MCF 10A (cell line): ENCODE measurements at regions of chr10 and their contacts with region 1.

Region 1: GRCh38 chr10:62038609-62039190 is 137.2 kb downstream of the ARID5B start:
- DNase-seq: peak; percentile 78
- H3K4me3 Mint-ChIP-seq: peak overlapping the region; percentile 30
- H3K27ac Mint-ChIP-seq: peak overlapping the region; percentile 52
- H3K4me1 Mint-ChIP-seq: peaks cover 41% of the 10 kb centered on the region
- H3K27me3 Mint-ChIP-seq: no peaks in the 10 kb centered on the region
- CTCF ChIP-seq: peak; percentile 76

Region 2: GRCh38 chr10:61404751-61405150 is 633.9 kb before region 1 on chr10:
- CTCF ChIA-PET with region 1: no interaction called
- POLR2A ChIA-PET with region 1: no interaction called
- intact Hi-C with region 1: no loop called
- DNase-seq: peak; percentile 2
- H3K4me3 Mint-ChIP-seq: no peak overlapping the region
- H3K27ac Mint-ChIP-seq: no peak overlapping the region
- H3K4me1 Mint-ChIP-seq: no peaks in the 10 kb centered on the region
- H3K27me3 Mint-ChIP-seq: no peaks in the 10 kb centered on the region
- CTCF ChIP-seq: no peak

Region 3: GRCh38 chr10:61750929-61751471 is 287.7 kb before region 1 on chr10:
- CTCF ChIA-PET with region 1: interaction called, 5 read pairs
- POLR2A ChIA-PET with region 1: no interaction called
- intact Hi-C with region 1: loop called (anchors 10 kb)
- DNase-seq: peak; percentile 68
- H3K4me3 Mint-ChIP-seq: no peak overlapping the region
- H3K27ac Mint-ChIP-seq: peak overlapping the region; percentile 86
- H3K4me1 Mint-ChIP-seq: peaks cover 31% of the 10 kb centered on the region
- H3K27me3 Mint-ChIP-seq: no peaks in the 10 kb centered on the region
- CTCF ChIP-seq: peak; percentile 47

Region 4: GRCh38 chr10:62025901-62026879 is 12.5 kb before region 1 on chr10:
- CTCF ChIA-PET with region 1: interaction called, 35 read pairs
- POLR2A ChIA-PET with region 1: interaction called, 45 read pairs
- intact Hi-C with region 1: no loop called
- DNase-seq: no peak
- H3K4me3 Mint-ChIP-seq: no peak overlapping the region
- H3K27ac Mint-ChIP-seq: peak overlapping the region; percentile 72
- H3K4me1 Mint-ChIP-seq: peaks cover 39% of the 10 kb centered on the region
- H3K27me3 Mint-ChIP-seq: no peaks in the 10 kb centered on the region
- CTCF ChIP-seq: no peak

Region 5: GRCh38 chr10:62095181-62096071 is 56.7 kb after region 1 on chr10:
- CTCF ChIA-PET with region 1: interaction called, 3 read pairs
- POLR2A ChIA-PET with region 1: interaction called, 11 read pairs
- intact Hi-C with region 1: no loop called
- DNase-seq: peak; percentile 81
- H3K4me3 Mint-ChIP-seq: peak overlapping the region; percentile 58
- H3K27ac Mint-ChIP-seq: peak overlapping the region; percentile 98
- H3K4me1 Mint-ChIP-seq: peaks cover 57% of the 10 kb centered on the region
- H3K27me3 Mint-ChIP-seq: no peaks in the 10 kb centered on the region
- CTCF ChIP-seq: no peak

Region 6: GRCh38 chr10:62268399-62269114 is 229.9 kb after region 1 on chr10 and contains the start of gene RTKN2:
- CTCF ChIA-PET with region 1: interaction called, 20 read pairs
- POLR2A ChIA-PET with region 1: interaction called, 6 read pairs
- intact Hi-C with region 1: no loop called
- DNase-seq: peak; percentile 71
- H3K4me3 Mint-ChIP-seq: peak within 1 kb of the TSS; percentile 86
- H3K27ac Mint-ChIP-seq: peak within 1 kb of the TSS; percentile 39
- H3K4me1 Mint-ChIP-seq: peaks cover 21% of the 10 kb centered on the region
- H3K27me3 Mint-ChIP-seq: no peaks in the 10 kb centered on the region
- CTCF ChIP-seq: no peak
- total RNA-seq, gene RTKN2: 1.6 and 2.6 TPM in 2 replicates